ENCODE measurements at regions of chr2 and their contacts with region 1.

Region 1: DNA sequence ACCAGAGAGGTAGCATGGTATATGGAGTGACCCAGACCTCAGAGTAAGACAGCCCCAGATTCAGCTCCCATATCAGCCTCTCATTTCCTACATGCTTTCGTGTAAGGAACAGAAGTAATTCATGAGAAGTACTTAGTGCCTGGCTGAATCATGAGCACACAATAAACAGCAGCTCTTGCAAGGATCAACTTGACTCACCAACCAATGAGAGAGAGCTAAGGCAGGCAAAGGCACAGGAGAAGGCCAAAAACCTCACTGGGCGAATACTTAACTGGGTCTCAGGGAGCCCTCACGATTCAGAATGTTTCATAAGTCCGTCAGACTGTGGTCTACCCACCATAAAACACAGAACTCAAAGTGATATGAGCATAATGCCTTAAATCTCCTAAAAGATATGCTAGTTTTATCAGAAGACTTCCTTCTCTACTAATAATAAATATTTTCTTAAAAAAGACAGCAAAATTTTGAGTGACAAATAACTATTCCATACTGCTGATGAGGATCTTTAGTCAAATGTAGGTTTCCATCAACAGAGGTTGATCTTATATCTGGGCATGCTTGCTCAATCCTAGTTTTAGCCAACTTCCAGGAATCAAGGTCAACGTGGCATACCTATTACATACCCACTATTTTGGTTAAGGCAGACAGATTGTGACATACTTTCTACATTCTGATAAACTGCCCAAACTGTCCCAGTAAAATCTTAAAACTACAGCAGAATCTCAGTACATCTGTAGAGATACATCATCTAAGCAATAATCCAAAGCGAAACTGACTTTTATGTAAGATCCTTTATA is 34.9 kb downstream of the IMMT start:
- DNase-seq: no peak
- ATAC-seq: no peak
- H3K4me3 ChIP-seq: no peak overlapping the region
- H3K27ac ChIP-seq: no peak overlapping the region
- H3K4me1 ChIP-seq: no peaks in the 10 kb centered on the region
- H3K27me3 ChIP-seq: no peaks in the 10 kb centered on the region
- CTCF ChIP-seq: no peak
- POLR2A ChIP-seq: no peak

Region 2: GRCh38 chr2:86054535-86055082 is 105.7 kb before region 1 on chr2:
- intact Hi-C with region 1: no loop called
- DNase-seq: no peak
- ATAC-seq: no peak
- H3K4me3 ChIP-seq: no peak overlapping the region
- H3K27ac ChIP-seq: no peak overlapping the region
- H3K4me1 ChIP-seq: peaks cover 0 to 9% (median 0%) of the 10 kb centered on the region in 12 donors
- H3K27me3 ChIP-seq: no peaks in the 10 kb centered on the region
- CTCF ChIP-seq: no peak
- POLR2A ChIP-seq: no peak

Region 3: DNA sequence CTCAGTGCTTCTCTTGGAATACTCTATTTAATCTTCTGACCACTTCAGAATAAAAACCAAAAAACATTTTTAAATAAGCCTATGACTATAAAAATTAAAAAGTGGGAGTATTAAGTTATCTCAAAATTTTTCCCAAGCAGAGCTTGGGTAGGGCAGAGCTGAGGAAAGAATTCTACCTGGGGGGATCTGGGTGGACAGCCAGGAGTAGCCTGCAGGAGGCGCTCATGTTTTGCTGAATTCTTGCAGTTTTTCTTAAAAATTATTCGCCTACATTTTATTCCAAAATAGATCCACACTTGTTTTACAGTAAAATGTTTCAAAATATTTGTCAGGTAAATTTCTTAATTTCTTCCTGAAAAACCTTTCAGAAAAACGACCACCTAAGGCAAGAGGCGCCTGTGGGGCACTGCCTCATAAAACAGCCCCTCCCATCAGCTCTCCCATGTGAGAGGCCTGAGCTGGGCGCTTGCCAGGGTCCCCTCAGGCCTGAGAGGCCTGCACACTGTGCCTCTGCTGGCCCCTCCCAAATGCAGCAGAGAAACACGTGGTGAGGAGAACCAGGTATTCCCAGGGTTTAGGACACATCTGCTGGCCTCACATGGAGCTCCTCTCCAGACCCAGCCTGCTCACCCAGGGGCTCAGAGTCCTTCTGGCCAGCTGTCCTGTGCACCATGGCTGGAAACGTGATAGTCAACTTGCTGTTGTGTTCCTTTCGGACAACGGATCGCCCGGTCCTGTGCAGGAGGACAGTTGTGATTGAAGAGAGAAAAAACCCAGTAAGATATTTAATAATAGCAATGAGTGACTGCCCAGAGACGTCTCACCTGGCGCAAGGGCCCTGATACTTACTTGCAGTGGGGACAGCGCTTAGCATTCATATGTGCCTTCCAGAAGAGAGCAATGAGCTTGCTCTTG is 72.2 kb before region 1 on chr2:
- intact Hi-C with region 1: no loop called
- DNase-seq: no peak
- ATAC-seq: peak in 1 of 4 donors; percentile 10
- H3K4me3 ChIP-seq: no peak overlapping the region
- H3K27ac ChIP-seq: no peak overlapping the region
- H3K4me1 ChIP-seq: no peaks in the 10 kb centered on the region
- H3K27me3 ChIP-seq: no peaks in the 10 kb centered on the region
- CTCF ChIP-seq: peak in 6 of 12 donors; percentile 10 to 26 (median 17)
- POLR2A ChIP-seq: no peak

Region 4: GRCh38 chr2:86134709-86135108 is 25.6 kb before region 1 on chr2:
- intact Hi-C with region 1: loop called in 1 of 10 experiments (anchors 5 kb)
- DNase-seq: no peak
- ATAC-seq: no peak
- H3K4me3 ChIP-seq: no peak overlapping the region
- H3K27ac ChIP-seq: no peak overlapping the region
- H3K4me1 ChIP-seq: no peaks in the 10 kb centered on the region
- H3K27me3 ChIP-seq: no peaks in the 10 kb centered on the region
- CTCF ChIP-seq: no peak
- POLR2A ChIP-seq: no peak

Region 5: GRCh38 chr2:86194751-86195054 is 34.3 kb after region 1 on chr2:
- intact Hi-C with region 1: no loop called
- DNase-seq: peak in 2 of 5 donors; percentile 98
- ATAC-seq: no peak
- H3K4me3 ChIP-seq: peak overlapping the region; percentile 65 to 98 (median 85)
- H3K27ac ChIP-seq: peak overlapping the region; percentile 11 to 100 (median 98)
- H3K4me1 ChIP-seq: peaks cover 0 to 66% (median 50%) of the 10 kb centered on the region in 12 donors
- H3K27me3 ChIP-seq: no peaks in the 10 kb centered on the region
- CTCF ChIP-seq: no peak
- POLR2A ChIP-seq: no peak

Measured in heart left ventricle (tissue), 16 donors.